ENCODE measurements at regions of chr4 and their contacts with region 1.

Region 1: DNA sequence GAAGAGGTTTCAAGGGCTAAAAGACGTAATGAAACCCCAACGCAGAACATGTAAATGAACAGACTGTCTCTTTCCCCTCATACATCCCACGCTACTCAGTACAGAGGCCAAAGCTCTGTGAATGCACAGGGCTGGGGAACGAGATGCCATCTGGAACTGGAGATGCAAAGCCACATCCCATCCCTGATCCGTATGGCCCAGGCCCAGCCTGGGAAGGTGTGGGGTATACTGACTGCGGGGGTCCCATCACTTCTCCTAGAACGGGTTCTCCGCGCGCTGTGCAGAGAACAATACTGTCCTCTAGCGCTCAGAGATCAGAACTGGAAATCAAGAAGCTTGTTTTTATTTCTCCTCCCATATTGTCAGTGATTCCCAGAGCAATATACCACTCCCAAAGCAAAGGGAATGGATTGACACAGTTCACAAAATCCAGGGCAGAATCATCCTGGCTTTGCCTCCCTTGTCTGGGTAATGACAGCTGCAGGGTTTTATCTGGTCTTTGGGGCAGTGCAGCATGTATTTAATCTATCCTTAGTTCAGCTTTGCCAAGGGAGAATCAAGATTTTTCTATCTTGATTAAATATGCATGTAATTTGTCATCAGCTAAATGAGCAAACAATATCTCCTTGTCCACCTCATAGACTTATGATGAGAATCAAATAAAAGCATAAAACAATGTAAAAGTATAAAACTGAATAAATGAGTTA is 47.3 kb upstream of the TLR3 start:
- DNase-seq: no peak
- ATAC-seq: peak; percentile 72 to 80

Region 2: DNA sequence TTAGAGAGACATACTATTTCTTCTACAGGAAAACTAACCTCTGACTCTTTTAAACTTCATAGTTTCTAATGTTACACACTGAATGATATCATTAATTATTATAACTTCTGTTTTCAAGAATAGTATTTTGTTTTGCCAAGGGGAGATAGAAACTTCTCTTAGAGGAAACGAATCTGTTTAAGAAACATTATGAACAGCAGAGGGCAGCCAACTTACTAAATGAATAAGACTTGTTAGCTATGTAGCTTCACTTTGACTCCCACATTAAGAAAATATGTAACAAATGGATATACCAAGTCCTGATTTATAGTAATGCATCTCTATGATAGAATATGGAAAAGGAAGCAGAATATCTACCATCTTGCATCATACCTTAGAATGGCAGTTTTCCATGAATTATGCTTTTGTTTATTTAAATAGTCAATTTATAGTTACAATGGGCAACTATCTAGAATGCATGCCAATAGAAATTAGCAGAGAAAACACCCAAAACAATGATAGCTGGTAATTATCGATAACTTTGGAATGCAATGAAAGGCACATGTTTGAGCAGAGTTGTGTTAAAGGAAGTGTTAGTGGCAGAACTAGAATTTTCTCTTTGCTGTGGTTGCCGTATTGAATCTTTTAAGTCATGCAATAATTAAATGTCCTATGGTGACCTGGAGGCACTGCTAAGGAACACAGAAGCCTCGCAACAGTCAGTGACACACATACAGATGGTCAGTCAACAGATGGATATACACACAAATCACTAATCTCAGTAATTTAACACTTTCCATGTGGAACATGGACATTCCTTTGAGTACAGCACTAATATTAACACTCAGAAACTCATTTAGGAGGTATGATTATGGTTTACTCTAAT is 380.6 kb before region 1 on chr4:
- intact Hi-C with region 1: loop called (anchors 5 to 10 kb)
- DNase-seq: no peak
- ATAC-seq: peak in 1 of 2 donors; percentile 35

Region 3: GRCh38 chr4:185656467-185656931 is 365.1 kb before region 1 on chr4:
- intact Hi-C with region 1: loop called in 1 of 2 experiments (anchors 5 kb)
- DNase-seq: peak; percentile 67
- ATAC-seq: peak; percentile 88 to 92

Measured in left cardiac atrium (tissue), 4 donors.